ENCODE measurements at regions of chr2 and their contacts with region 1.

Region 1: DNA sequence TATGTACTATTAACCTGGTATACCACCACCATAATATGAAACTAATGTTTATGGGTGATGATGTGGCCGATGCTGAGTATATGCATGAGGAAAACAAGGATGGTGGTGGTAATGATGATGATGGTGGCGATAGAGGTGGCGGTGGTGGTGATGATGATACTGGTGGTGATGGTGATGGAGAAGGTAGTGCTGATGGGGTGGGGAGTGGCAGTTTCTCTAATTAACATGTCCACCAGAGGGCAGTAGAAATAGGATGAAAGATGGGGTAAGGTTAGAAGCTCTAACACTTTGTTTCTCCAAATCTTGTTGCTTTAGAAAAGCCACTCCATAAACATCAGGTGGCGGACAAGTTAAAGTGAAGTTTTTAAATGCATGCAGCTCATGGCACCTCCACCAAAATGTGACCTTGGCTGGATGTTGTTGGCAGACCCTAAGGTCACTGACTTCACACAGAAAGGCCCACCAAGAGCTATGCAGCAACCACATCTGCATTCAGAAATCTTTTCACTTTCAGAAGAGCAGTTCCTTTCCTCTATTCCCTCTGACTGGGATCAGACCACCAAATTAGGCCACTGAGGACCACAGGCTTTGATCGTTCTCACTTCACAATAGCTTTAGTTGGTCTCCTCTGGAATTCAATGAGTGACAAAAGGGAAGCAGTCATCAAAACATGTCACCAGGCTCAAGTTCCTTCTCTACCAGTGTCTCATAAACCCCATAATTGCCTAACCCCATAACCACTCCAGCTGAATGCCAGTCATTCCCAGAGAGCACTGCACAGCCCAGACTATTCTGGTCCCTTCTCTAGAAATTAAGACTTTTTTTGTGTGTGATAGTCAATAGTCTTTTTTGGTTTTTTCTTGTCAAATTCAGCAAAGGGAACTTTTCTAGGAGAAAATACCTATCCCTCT is 7.5 kb upstream of the BCL11A start:
- DNase-seq: no peak
- ATAC-seq: peak in 2 of 4 donors; percentile 61 to 81
- H3K4me3 ChIP-seq: no peak overlapping the region
- H3K27ac ChIP-seq: no peak overlapping the region
- H3K4me1 ChIP-seq: no peaks in the 10 kb centered on the region
- H3K27me3 ChIP-seq: peaks cover 1 to 50% (median 6%) of the 10 kb centered on the region in 3 donors
- CTCF ChIP-seq: peak; percentile 52

Region 2: GRCh38 chr2:60674524-60675165 is 113.7 kb after region 1 on chr2:
- intact Hi-C with region 1: loop called in 1 of 2 experiments (anchors 5 kb)
- DNase-seq: peak; percentile 84 to 90
- ATAC-seq: peak; percentile 83 to 97 (median 92)
- H3K4me3 ChIP-seq: no peak overlapping the region
- H3K27ac ChIP-seq: no peak overlapping the region
- H3K4me1 ChIP-seq: no peaks in the 10 kb centered on the region
- H3K27me3 ChIP-seq: no peaks in the 10 kb centered on the region
- CTCF ChIP-seq: peak; percentile 84

Region 3: DNA sequence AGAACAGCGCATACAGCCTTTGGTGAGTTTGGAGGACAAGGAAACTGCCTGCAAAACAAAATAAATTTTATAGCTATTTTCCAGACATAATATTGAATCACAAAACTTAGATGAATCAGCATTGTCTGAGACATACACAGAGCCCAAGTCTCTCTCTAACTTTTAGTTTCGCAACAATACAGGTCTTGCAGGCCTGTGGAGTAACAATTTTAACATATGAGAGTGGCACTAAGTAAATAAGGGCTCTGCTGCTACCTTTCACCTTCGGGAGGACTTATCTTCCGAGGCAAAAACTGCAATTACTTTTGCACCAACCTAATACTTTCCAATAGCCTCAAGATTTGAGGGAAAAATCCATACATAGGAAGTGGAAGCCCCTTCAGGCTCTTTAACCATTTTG is 400.5 kb after region 1 on chr2:
- intact Hi-C with region 1: no loop called
- DNase-seq: no peak
- ATAC-seq: no peak
- H3K4me3 ChIP-seq: no peak overlapping the region
- H3K27ac ChIP-seq: no peak overlapping the region
- H3K4me1 ChIP-seq: no peaks in the 10 kb centered on the region
- H3K27me3 ChIP-seq: no peaks in the 10 kb centered on the region
- CTCF ChIP-seq: no peak